ENCODE measurements at regions of chr3 and their contacts with region 1.

Region 1: GRCh38 chr3:159260049-159260662 is 458.3 kb downstream of the MFSD1 start:
- DNase-seq: no peak

Region 2: DNA sequence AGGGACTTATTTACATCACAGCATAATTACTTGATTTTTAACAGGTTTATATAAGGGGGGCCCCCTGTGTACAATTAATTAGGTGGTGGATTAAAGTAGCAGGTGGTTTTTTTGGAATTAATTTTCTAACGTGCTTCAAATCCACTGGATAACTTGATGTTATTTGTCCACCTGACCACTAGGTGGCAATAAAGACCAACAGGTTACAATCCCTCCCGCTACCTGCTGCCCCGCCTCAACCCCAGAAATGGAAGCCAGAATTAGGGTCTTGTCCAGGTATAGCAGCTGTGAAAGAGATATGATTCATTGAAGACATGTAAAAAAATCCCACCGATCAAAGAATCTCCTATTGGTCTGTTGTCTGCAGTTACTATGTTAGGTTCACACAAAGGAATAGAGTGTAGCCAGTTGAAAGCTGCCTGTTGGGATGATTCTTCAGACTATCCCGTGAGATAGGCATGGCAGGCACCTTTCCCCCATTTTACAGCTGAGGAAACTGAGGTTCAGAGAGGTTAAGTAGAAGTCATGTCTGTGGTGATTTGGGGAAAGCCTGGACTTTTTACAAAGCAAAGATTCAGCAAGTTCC is 414.3 kb before region 1 on chr3:
- intact Hi-C with region 1: loop called (anchors 2 kb)
- DNase-seq: no peak

Region 3: GRCh38 chr3:158918008-158918407 is 342.1 kb before region 1 on chr3:
- intact Hi-C with region 1: loop called (anchors 5 kb)
- DNase-seq: no peak

Region 4: GRCh38 chr3:159229116-159229680 is 31.0 kb before region 1 on chr3:
- intact Hi-C with region 1: no loop called
- DNase-seq: no peak

Region 5: DNA sequence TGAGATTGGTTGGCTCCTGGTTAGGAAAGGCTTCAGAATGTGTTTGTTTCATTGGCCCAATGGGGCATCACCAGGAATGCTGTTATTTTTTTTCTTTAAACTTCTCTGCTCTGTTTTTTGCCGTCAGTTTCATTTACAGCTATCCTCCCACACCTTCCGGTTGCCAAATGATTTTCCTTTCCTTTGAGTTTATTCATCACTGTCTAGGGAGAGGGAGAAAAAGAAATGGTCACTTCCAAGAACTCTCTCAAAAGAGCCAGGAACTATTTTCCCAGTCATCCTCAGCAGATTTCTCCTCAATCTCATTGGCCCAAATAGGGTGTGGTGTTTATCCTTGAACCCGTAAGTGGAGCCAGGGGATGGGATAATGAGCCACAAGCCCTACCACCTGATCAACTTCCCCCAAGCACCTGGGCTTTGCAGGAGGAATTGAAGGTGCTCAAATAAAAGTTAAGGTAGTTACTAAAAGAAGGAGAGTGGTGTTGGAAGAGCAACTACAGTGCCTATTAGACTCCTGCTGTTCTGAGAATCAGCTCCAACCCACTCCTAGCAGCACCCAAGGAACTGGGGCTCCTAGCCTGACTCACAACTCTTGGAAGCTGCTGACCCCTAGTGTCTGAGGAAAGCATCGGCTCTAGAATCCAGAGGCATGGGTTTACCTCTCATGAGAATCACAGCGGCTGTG is 544.7 kb after region 1 on chr3:
- intact Hi-C with region 1: loop called (anchors 2 kb)
- DNase-seq: no peak

Region 6: GRCh38 chr3:159884661-159885402 is 624.7 kb after region 1 on chr3:
- intact Hi-C with region 1: loop called (anchors 10 kb)
- DNase-seq: no peak

Region 7: DNA sequence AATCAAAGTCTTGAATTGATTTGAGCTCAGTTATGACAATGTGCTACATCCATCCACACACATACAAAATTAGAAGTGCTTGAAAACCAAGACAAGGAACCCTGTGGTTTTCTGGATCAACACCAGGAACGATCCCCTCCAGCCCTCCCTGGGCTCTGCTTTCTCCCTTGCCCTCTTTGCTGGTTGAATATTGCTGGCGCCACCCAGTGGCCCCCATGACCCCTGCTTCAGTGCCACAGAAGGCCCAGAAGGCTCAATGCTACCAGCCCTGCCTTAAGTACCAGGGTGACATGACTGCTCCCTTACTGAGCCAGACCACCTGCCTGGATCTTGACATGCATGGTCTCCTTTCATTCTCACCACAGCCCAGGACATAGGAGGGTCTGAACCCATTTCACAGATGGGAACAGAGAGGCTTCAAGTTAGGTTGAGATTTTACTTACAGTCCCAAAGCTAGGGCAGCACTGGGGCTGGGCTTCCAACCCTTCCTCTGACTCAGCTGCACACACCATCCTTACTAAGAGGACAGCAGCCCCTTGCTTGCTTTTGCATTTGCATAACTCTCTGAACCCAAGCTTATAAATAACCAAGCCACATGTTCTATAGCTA is 743.5 kb after region 1 on chr3:
- intact Hi-C with region 1: loop called (anchors 5 kb)
- DNase-seq: no peak

Measured in cardiac septum (tissue), 1 donor.